Caco-2 (cell line): ENCODE measurements at regions of chr4 and their contacts with region 1.

Region 1: DNA sequence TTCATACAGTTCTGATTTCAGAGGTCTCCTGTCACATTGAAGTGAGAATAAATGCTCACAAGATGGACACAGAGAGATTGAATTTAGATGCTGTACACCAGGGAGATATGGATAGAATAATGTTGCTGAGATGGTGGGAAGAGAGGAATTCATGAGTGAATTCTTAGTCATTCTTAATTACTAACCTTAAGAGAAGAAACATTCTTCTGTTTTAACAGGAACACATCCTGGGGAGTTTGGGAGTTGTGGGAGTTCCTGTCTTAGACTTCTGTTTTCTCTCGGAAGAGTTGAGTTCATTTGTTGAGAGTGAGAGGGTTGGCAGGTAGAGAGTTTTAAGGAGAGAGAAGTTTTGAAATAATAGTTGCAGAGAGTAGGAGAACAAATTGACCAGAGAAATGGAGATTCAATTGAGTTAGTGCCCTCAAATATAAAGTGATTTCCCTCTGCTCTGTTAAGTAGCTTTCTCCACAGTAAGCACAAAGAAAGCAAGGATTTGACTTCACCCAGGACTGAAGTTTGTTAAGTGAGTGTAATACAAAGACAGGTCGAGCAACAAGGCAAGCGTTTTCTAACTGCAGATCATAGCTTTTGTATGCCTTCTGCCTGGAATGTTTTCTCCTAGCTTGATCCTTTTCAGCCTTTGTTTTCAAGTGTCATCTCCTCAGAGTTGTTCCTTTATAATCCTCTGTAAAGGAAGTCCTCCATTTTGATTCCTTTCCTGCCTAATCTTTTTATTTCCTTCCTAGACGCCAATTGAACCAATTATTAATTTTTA is 205.9 kb downstream of the RAPGEF2 start:
- DNase-seq: no peak
- H3K4me3 ChIP-seq: no peak overlapping the region
- H3K4me3 Mint-ChIP-seq: no peak overlapping the region
- H3K27ac Mint-ChIP-seq: no peak overlapping the region
- H3K4me1 ChIP-seq: no peaks in the 10 kb centered on the region
- H3K4me1 Mint-ChIP-seq: peaks cover 7% of the 10 kb centered on the region
- H3K27me3 ChIP-seq: no peaks in the 10 kb centered on the region
- H3K27me3 Mint-ChIP-seq: no peaks in the 10 kb centered on the region
- CTCF ChIP-seq: no peak

Region 2: DNA sequence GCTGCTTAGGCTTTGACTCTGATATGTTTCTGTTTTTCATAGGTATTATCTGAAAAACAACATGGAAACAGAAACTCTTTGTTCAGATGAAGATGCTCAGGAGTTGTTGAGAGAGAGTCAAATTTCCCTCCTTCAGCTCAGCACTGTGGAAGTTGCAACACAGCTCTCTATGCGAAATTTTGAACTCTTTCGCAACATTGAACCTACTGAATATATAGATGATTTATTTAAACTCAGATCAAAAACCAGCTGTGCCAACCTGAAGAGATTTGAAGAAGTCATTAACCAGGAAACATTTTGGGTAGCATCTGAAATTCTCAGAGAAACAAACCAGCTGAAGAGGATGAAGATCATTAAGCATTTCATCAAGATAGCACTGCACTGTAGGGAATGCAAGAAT is 32.8 kb after region 1 on chr4:
- CTCF ChIA-PET with region 1: no interaction called
- POLR2A ChIA-PET with region 1: no interaction called
- intact Hi-C with region 1: loop called (anchors 1 kb)
- DNase-seq: no peak
- H3K4me3 ChIP-seq: no peak overlapping the region
- H3K4me3 Mint-ChIP-seq: no peak overlapping the region
- H3K27ac Mint-ChIP-seq: no peak overlapping the region
- H3K4me1 ChIP-seq: no peaks in the 10 kb centered on the region
- H3K4me1 Mint-ChIP-seq: no peaks in the 10 kb centered on the region
- H3K27me3 ChIP-seq: no peaks in the 10 kb centered on the region; the same call in 1 of the 2 replicates
- H3K27me3 Mint-ChIP-seq: no peaks in the 10 kb centered on the region
- CTCF ChIP-seq: no peak